ENCODE measurements at regions of chr10 and their contacts with region 1.

Region 1: DNA sequence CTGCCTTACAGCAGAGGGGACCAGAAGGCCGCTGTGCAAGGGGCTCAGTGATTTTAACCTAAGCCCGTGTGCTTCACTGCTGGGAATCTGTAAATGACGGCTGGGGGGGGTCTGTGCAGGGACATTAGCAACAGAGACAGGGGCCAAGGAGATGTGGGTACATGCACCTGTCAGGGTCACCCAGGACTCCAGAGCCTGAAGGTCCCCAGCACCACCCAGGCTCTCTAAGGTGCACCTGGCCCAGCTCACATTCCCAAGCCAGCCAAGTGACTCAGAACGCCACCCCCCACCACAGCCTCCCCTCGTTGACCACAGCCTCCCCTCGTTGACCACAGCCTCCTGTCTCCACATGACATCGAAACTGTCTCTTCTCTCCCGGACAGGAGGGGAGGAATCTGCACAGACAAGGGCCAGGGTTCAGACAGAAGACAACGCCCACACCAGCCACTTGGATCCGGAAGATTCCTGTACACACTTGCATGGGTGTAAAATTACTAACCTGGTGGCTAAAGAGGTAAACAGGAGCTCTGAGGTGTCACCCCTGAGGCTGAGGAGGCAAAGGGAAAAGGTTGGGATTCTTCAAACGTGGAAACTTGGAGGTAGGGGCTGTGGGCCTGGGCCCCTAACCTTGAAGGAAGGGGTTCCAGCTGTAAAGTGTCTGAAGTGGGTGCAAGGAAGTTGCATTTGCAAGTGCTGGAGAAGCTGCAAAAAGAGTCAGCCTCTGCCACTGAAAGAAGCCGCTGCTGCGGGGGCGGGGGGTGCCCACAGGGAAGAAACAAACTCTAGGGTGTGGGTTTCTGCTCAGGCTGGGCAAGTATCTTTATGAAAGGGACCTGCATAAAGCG is 27.0 kb downstream of the CALML3 start:
- DNase-seq: no peak
- H3K4me3 ChIP-seq: no peak overlapping the region
- H3K27ac ChIP-seq: peak overlapping the region; percentile 91 to 92
- H3K4me1 ChIP-seq: peaks cover 55% of the 10 kb centered on the region
- H3K27me3 ChIP-seq: no peaks in the 10 kb centered on the region
- CTCF ChIP-seq: peak in 1 of 4 experiments; percentile 14
- POLR2A ChIP-seq: no peak

Region 2: DNA sequence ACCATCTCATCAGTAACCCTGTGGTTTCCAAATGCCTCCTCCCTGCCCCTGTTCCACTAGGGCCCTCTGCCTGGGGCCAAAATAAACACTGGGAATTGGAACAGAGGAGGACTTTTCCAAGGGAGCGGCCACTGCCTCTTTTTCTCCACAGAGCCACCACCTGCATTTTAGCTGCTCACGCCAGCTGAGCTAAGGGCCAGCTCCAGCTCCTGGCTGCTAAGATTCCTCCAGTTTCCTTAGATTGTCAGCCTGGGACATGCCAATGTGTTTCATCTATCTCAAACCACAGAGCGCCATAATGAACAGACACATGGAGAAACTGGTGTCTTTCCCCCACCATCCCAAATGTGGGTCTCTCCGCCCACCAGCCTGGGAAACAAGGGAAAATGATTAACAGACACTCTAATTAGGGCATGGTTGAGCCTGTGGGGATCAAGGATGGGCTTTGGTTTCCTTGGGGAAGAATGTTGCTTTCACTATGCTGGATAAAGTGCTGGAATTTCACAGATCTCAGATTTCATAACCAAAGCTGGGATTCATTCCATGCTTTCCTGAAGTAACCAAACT is 62.5 kb after region 1 on chr10:
- intact Hi-C with region 1: loop called (anchors 10 kb)
- DNase-seq: no peak
- H3K4me3 ChIP-seq: no peak overlapping the region
- H3K27ac ChIP-seq: no peak overlapping the region
- H3K4me1 ChIP-seq: no peaks in the 10 kb centered on the region
- H3K27me3 ChIP-seq: no peaks in the 10 kb centered on the region
- CTCF ChIP-seq: no peak
- POLR2A ChIP-seq: no peak